B cell (primary cell): ENCODE measurements at regions of chr5 and their contacts with region 1.

Region 1: GRCh38 chr5:140244525-140245025 is 58.3 kb downstream of the PFDN1 start:
- DNase-seq: peak; percentile 83
- ATAC-seq: peak; percentile 82
- H3K4me3 ChIP-seq: no peak overlapping the region
- H3K4me3 Mint-ChIP-seq: no peak overlapping the region
- H3K27ac ChIP-seq: no peak overlapping the region
- H3K27ac Mint-ChIP-seq: no peak overlapping the region
- H3K4me1 ChIP-seq: peaks cover 14 to 19% of the 10 kb centered on the region in 2 donors
- H3K4me1 Mint-ChIP-seq: peaks cover 22% of the 10 kb centered on the region
- H3K27me3 ChIP-seq: no peaks in the 10 kb centered on the region
- H3K27me3 Mint-ChIP-seq: no peaks in the 10 kb centered on the region
- CTCF ChIP-seq: peak; percentile 87

Region 2: DNA sequence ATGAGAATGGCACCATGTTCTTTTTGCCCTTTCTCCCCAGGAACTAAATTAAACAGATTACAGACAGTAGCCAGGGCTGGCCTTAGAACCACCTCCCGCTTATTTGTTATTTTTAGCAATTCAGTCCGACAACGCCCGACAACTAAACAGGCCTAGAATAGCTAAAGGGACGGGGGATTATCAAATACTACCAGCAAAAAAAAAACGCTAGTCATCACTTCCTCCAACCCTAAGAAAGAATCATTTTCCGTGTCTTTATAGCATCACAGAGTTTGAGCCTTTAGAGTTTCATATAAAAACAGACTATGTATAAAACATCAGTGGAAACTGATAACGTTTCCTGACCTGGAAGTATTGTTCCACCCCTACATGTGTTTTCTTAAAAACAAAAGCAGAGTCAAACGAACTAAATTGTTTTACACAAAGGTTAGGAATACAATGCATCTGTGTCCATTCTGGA is 23.0 kb after region 1 on chr5:
- CTCF ChIA-PET with region 1: interaction called, 19 read pairs
- POLR2A ChIA-PET with region 1: no interaction called
- intact Hi-C with region 1: no loop called
- DNase-seq: no peak
- ATAC-seq: no peak
- H3K4me3 ChIP-seq: no peak overlapping the region
- H3K4me3 Mint-ChIP-seq: no peak overlapping the region
- H3K27ac ChIP-seq: no peak overlapping the region
- H3K27ac Mint-ChIP-seq: no peak overlapping the region
- H3K4me1 ChIP-seq: peaks cover 3 to 9% of the 10 kb centered on the region in 2 donors
- H3K4me1 Mint-ChIP-seq: peaks cover 19% of the 10 kb centered on the region
- H3K27me3 ChIP-seq: no peaks in the 10 kb centered on the region
- H3K27me3 Mint-ChIP-seq: no peaks in the 10 kb centered on the region
- CTCF ChIP-seq: no peak

Region 3: GRCh38 chr5:140284013-140284412 is 39.4 kb after region 1 on chr5:
- CTCF ChIA-PET with region 1: interaction called, 5 read pairs
- POLR2A ChIA-PET with region 1: no interaction called
- intact Hi-C with region 1: loop called (anchors 5 kb)
- DNase-seq: no peak
- ATAC-seq: no peak
- H3K4me3 ChIP-seq: peak overlapping the region in 1 of 5 experiments; percentile 66
- H3K4me3 Mint-ChIP-seq: peak overlapping the region; percentile 88
- H3K27ac ChIP-seq: peak overlapping the region in 1 of 2 donors; percentile 60
- H3K27ac Mint-ChIP-seq: peak overlapping the region; percentile 59
- H3K4me1 ChIP-seq: peaks cover 15 to 19% of the 10 kb centered on the region in 2 donors
- H3K4me1 Mint-ChIP-seq: peaks cover 27% of the 10 kb centered on the region
- H3K27me3 ChIP-seq: no peaks in the 10 kb centered on the region
- H3K27me3 Mint-ChIP-seq: no peaks in the 10 kb centered on the region
- CTCF ChIP-seq: no peak

Region 4: DNA sequence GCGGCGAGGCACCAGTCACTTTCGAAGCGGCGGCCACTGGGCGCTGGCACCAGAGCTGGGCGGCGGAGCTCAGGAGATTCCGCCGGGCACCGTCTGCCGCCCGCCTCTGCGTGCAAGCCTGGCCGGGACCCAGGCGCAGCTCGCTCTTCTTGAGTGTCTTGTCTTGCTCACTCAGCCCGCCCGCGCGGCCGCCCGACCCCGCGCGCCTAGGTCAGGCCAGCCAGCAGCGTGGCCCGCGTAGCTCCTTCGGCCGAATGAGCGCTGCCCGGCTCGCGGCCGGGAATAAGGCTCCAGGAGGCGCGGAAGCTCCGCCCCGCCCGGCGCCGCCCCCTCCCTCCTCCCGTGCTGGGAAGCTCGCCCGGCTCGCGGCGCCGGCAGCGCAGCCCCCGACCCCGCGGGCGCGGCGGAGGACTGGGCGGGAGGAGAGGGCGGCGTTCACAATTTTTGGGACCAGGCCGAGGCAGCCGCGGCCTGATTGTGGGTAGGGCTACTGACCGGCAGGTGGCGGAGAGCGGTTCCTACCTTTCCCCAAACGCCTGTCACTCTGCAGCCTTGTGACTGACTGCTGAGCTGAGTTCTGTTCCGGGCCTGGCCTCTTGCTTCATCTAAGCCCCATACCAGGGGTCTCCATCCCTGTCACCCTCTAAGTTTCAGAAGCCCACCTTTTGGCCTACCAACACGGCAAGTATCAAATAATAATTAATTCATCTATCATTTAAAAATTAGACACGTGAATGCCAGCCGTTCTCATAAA is 102.0 kb after region 1 on chr5 and contains the start of gene HBEGF:
- CTCF ChIA-PET with region 1: interaction called, 594 read pairs
- POLR2A ChIA-PET with region 1: interaction called, 3 read pairs
- intact Hi-C with region 1: loop called (anchors 1 kb)
- DNase-seq: peak; percentile 78
- ATAC-seq: peak; percentile 74
- H3K4me3 ChIP-seq: peak within 1 kb of the TSS; percentile 34 to 67 (median 58)
- H3K4me3 Mint-ChIP-seq: peak within 1 kb of the TSS; percentile 82
- H3K27ac ChIP-seq: no peak within 1 kb of the TSS
- H3K27ac Mint-ChIP-seq: no peak within 1 kb of the TSS
- H3K4me1 ChIP-seq: peaks cover 46 to 60% of the 10 kb centered on the region in 2 donors
- H3K4me1 Mint-ChIP-seq: peaks cover 50% of the 10 kb centered on the region
- H3K27me3 ChIP-seq: peaks cover 0 to 16% (median 0%) of the 10 kb centered on the region in 4 experiments
- H3K27me3 Mint-ChIP-seq: peaks cover 5% of the 10 kb centered on the region
- CTCF ChIP-seq: peak; percentile 68
- total RNA-seq, gene HBEGF: 0.61 and 0.89 TPM in 2 replicates

Region 5: GRCh38 chr5:140357726-140358093 is 113.1 kb after region 1 on chr5:
- CTCF ChIA-PET with region 1: interaction called, 594 read pairs
- POLR2A ChIA-PET with region 1: no interaction called
- intact Hi-C with region 1: loop called (anchors 1 kb)
- DNase-seq: peak; percentile 83
- ATAC-seq: peak; percentile 99
- H3K4me3 ChIP-seq: peak overlapping the region in 1 of 5 experiments; percentile 18
- H3K4me3 Mint-ChIP-seq: peak overlapping the region; percentile 46
- H3K27ac ChIP-seq: no peak overlapping the region
- H3K27ac Mint-ChIP-seq: no peak overlapping the region
- H3K4me1 ChIP-seq: peaks cover 6 to 12% of the 10 kb centered on the region in 2 donors
- H3K4me1 Mint-ChIP-seq: peaks cover 6% of the 10 kb centered on the region
- H3K27me3 ChIP-seq: no peaks in the 10 kb centered on the region
- H3K27me3 Mint-ChIP-seq: peaks cover 8% of the 10 kb centered on the region
- CTCF ChIP-seq: peak; percentile 86

Region 6: GRCh38 chr5:140725799-140726471 is 481.4 kb after region 1 on chr5:
- CTCF ChIA-PET with region 1: interaction called, 10 read pairs
- POLR2A ChIA-PET with region 1: no interaction called
- intact Hi-C with region 1: no loop called
- DNase-seq: peak; percentile 40
- ATAC-seq: peak; percentile 56
- H3K4me3 ChIP-seq: peak overlapping the region in 1 of 5 experiments; percentile 33
- H3K4me3 Mint-ChIP-seq: no peak overlapping the region
- H3K27ac ChIP-seq: no peak overlapping the region
- H3K27ac Mint-ChIP-seq: peak overlapping the region; percentile 37
- H3K4me1 ChIP-seq: peaks cover 0 to 6% of the 10 kb centered on the region in 2 donors
- H3K4me1 Mint-ChIP-seq: no peaks in the 10 kb centered on the region
- H3K27me3 ChIP-seq: peaks cover 0 to 17% (median 9%) of the 10 kb centered on the region in 4 experiments
- H3K27me3 Mint-ChIP-seq: peaks cover 33% of the 10 kb centered on the region
- CTCF ChIP-seq: no peak